ENCODE measurements at regions of chr6 and their contacts with region 1.

Region 1: DNA sequence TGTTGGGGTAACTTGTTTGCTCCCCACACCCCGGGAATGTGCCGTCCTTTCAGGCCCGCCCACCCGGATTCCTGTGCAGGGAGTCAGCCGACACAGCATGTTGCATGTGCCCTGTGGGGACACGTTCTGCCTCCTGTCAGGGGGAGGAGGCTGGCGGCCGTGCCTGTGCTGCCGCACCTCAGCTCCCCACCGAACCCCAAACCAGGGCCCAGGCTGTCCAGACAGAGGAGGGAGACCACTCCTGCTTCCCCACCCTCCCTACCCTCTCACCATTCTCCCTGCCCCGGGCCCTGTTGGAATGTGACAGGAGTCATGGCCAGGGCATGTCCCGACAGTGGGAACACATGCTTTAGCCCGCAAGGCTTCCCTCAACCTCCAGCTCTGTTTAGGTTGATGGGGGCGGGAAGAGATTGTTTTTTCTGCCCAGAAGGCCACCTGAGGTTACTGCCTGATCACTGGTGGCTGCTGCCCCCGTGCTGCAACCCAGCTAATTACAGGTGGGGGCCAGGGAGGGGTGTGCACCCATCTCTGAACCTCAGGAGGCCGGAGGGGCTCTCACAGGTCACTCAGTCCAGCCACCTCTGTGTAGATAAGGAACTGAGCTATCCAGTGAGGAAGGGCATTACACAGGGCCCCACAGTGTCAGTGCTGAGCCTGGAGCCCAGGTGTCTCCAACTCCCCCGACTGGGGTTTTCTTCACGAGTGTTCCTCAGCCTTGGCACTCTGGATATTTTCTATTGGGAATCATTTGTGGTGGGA is 13.6 kb downstream of the LRRC73 start:
- DNase-seq: no peak
- ATAC-seq: no peak
- H3K4me3 Mint-ChIP-seq: no peak overlapping the region
- H3K27ac Mint-ChIP-seq: no peak overlapping the region
- H3K4me1 Mint-ChIP-seq: peaks cover 15% of the 10 kb centered on the region
- H3K27me3 Mint-ChIP-seq: no peaks in the 10 kb centered on the region

Region 2: DNA sequence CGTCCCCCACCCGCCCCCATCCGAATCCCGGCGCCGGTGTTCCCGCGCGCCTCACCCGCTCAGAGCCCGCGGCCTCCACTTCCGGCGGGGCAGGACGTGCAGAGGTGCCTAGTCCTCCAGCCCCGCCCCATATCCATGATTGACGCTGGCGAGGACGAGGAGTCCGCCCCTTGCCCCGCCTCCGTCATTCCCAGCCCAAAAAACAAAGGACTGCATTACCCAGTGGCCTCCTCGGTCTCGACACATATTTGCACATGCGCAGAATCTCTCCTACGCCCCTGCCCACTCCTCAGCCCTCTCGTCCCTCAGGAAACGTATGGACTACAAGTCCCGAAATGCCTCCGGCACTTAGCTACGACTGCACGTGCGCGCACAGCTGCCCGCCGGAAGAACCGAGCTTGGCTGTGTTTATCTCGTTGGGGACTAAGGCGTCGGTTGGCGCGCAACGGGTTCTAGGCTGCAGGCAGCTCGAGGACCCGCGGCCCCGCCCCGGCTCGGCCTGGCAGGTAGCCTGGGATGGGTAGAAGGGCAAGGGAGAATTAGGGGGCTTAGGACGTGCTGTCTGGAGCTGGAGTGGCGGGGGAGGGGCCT is 482.6 kb before region 1 on chr6 and contains the starts of genes KLHDC3 and MEA1:
- CTCF ChIA-PET with region 1: no interaction called
- DNase-seq: peak; percentile 100
- ATAC-seq: peak; percentile 93
- H3K4me3 Mint-ChIP-seq: peak within 1 kb of the TSS; percentile 96
- H3K27ac Mint-ChIP-seq: peak within 1 kb of the TSS; percentile 83
- H3K4me1 Mint-ChIP-seq: peaks cover 41% of the 10 kb centered on the region
- H3K27me3 Mint-ChIP-seq: no peaks in the 10 kb centered on the region
- total RNA-seq, gene KLHDC3: 62.6 to 75.1 TPM
- total RNA-seq, gene MEA1: 61.8 to 75.2 TPM

Region 3: DNA sequence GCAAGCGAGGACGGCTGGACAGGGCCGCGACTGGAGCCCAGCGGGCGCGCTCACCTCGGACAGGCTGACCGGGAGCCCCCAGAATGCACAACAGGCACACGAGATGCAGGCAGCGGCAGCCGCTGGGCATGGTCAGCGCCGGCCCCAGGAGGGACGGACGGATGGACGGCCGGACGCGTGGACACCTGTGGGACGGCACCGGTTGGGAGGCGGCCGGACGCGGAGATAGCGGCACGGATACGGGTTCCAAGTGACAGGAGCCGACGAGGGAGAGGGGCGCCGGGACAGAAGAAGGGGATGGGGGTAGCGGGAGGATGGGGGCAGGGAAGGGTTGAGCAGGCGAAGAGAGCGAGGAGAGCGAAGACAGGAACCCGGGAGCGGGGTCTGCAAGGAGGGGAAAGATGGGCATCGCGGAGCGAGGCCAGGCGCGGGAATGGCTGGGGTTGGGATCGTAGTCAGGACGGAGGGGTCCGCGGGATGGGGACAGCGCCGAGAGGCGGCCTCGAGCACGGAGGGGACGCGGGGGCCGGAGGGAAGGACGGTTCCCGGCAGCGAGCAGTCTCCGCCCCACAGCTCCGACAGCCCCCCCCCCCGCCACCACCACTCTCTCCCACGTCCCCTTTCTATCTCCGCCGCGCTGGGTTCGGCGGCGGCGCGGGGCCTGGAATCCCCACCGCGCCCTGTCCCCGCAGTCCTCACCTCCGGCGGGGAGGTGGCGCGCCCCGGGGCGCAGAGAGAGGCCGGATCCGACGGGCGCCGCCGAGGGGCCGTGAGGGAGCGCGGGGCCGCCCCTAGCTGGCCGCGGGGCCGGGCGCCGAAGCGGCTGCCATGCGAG is 41.6 kb before region 1 on chr6:
- CTCF ChIA-PET with region 1: interaction called, 11 read pairs
- DNase-seq: no peak
- ATAC-seq: peak; percentile 72
- H3K4me3 Mint-ChIP-seq: peak overlapping the region; percentile 64
- H3K27ac Mint-ChIP-seq: no peak overlapping the region
- H3K4me1 Mint-ChIP-seq: peaks cover 8% of the 10 kb centered on the region
- H3K27me3 Mint-ChIP-seq: peaks cover 25% of the 10 kb centered on the region

Region 4: GRCh38 chr6:43608310-43608763 is 111.8 kb after region 1 on chr6:
- CTCF ChIA-PET with region 1: no interaction called
- DNase-seq: peak; percentile 72
- ATAC-seq: peak; percentile 64
- H3K4me3 Mint-ChIP-seq: no peak overlapping the region
- H3K27ac Mint-ChIP-seq: no peak overlapping the region
- H3K4me1 Mint-ChIP-seq: peaks cover 6% of the 10 kb centered on the region
- H3K27me3 Mint-ChIP-seq: no peaks in the 10 kb centered on the region

Measured in activated CD8-positive, alpha-beta memory T cell treated with anti-CD3 and anti-CD28 coated beads, Interleukin-2, amount 10 ng/mL, durations not matched to agents 7 days and 5 days (primary cell).